ENCODE measurements at regions of chr3 and their contacts with region 1.

Region 1: DNA sequence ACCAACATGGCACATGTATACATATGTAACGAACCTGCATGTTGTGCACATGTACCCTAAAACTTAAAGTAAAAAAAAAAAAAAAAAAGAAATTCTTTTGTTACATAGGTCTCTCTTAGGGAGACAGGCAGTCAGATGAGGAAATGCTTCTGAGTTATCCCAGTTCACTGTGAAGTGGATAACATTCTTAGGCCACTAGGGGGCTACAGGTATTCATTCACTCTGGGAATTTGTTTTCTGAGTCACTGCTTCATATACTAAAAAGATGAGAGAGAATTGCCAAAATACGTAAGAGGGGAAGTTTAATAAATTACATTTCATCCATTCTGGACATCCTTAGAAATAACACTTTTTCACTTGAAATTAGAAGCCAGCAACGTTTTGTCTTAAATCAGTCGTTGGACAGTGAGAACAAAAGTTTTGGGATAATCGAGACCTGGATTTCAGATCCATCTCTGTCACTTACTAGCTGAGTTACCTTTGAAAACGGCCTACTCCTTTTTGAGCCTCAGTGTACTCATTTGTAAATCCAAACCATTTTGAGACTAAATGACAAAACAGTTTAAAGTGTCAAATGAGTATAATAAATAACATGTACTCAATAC is 738.4 kb upstream of the ALCAM start:
- DNase-seq: no peak
- H3K4me3 ChIP-seq: no peak overlapping the region
- H3K27ac ChIP-seq: no peak overlapping the region
- H3K4me1 ChIP-seq: no peaks in the 10 kb centered on the region
- H3K27me3 ChIP-seq: no peaks in the 10 kb centered on the region
- CTCF ChIP-seq: peak; percentile 27 to 46 (median 31)
- EP300 ChIP-seq: no peak
- POLR2A ChIP-seq: no peak

Region 2: GRCh38 chr3:104768886-104769285 is 140.6 kb after region 1 on chr3:
- in situ Hi-C with region 1: no loop called
- intact Hi-C with region 1: loop called (anchors 2 kb)
- DNase-seq: no peak
- H3K4me3 ChIP-seq: no peak overlapping the region
- H3K27ac ChIP-seq: no peak overlapping the region
- H3K4me1 ChIP-seq: no peaks in the 10 kb centered on the region
- H3K27me3 ChIP-seq: no peaks in the 10 kb centered on the region
- CTCF ChIP-seq: no peak
- EP300 ChIP-seq: no peak
- POLR2A ChIP-seq: no peak

Region 3: GRCh38 chr3:105495021-105495420 is 866.7 kb after region 1 on chr3:
- in situ Hi-C with region 1: no loop called
- intact Hi-C with region 1: no loop called
- DNase-seq: no peak
- H3K4me3 ChIP-seq: no peak overlapping the region
- H3K27ac ChIP-seq: no peak overlapping the region
- H3K4me1 ChIP-seq: no peaks in the 10 kb centered on the region
- H3K27me3 ChIP-seq: no peaks in the 10 kb centered on the region
- CTCF ChIP-seq: no peak
- EP300 ChIP-seq: no peak
- POLR2A ChIP-seq: no peak